Upper lobe of right lung (tissue), 1 donor: ENCODE measurements at regions of chr9 and their contacts with region 1.

Region 1: GRCh38 chr9:70574151-70574837 is 159.8 kb upstream of the KLF9 start:
- DNase-seq: no peak
- ATAC-seq: no peak
- H3K4me3 ChIP-seq: no peak overlapping the region
- H3K27ac ChIP-seq: peak overlapping the region; percentile 43
- H3K4me1 ChIP-seq: peaks cover 11% of the 10 kb centered on the region
- H3K27me3 ChIP-seq: no peaks in the 10 kb centered on the region
- CTCF ChIP-seq: no peak

Region 2: DNA sequence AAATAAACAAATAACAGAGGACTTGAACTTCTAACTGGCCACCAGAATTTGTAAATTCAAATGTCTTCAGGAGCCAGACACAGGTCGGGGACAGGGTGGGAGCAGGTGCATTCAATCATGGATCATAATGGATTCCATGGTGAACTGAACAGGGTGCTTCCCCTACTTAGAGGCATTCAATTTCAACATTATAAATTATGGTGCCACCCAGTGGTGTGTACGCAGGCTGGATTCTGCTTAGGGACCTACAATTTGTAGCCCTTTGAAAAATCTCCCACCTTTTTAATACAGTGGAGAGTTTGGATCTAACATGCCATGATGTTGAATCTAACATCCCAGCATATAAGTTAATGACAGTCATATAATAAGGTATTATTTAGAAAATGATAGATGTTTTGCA is 182.1 kb before region 1 on chr9:
- intact Hi-C with region 1: no loop called
- DNase-seq: no peak
- ATAC-seq: peak; percentile 67
- H3K4me3 ChIP-seq: no peak overlapping the region
- H3K27ac ChIP-seq: no peak overlapping the region
- H3K4me1 ChIP-seq: peaks cover 72% of the 10 kb centered on the region
- H3K27me3 ChIP-seq: no peaks in the 10 kb centered on the region
- CTCF ChIP-seq: peak; percentile 33

Region 3: DNA sequence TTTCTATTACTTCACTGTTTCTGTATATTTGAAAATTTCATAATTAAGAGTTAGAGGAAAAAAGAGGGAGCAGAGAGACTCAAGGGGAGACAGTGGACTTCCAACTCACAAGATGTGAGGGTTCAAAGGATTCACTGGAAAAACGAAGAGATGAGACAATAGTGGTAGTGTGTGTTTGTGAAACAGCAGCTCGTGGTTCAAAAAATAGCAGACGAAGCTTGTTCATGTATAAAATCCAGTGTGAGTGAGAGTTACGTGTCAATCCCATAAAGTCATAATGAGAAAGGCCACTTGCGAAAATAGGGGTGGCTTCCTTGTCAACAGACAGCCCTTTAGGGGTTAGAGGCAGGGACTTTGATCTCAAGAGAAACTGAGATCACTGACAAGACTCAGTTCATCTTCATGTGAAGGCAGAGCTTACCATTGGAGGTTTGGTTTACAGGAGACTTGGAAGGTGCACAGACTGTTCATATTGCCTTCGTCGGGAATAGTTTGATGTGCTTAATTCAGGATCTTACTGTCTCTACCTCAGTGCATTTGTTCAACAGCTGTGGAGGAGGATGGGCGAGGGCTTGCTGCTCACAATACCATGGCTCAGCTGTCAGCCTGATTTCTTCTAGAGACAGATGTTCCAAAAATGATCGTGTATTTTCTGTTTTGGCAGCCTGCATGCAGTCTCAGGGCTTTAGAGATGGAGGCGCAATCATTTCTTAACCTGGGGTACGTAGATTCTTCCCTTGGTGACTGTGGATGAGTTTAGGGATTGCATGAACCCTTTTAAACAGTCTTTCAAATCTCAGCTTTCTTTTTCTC is 54.2 kb before region 1 on chr9:
- intact Hi-C with region 1: loop called (anchors 10 kb)
- DNase-seq: no peak
- ATAC-seq: no peak
- H3K4me3 ChIP-seq: no peak overlapping the region
- H3K27ac ChIP-seq: no peak overlapping the region
- H3K4me1 ChIP-seq: no peaks in the 10 kb centered on the region
- H3K27me3 ChIP-seq: no peaks in the 10 kb centered on the region
- CTCF ChIP-seq: no peak